Tibial artery (tissue), 4 donors: ENCODE measurements at regions of chr2 and their contacts with region 1.

Region 1: GRCh38 chr2:44291281-44292248 is 16.3 kb downstream of the SLC3A1 start:
- DNase-seq: peak; percentile 38 to 80
- H3K4me3 ChIP-seq: peak overlapping the region; percentile 21 to 23
- H3K27ac ChIP-seq: peak overlapping the region; percentile 63 to 69
- H3K4me1 ChIP-seq: peaks cover 0 to 41% (median 23%) of the 10 kb centered on the region in 4 donors
- H3K27me3 ChIP-seq: no peaks in the 10 kb centered on the region
- CTCF ChIP-seq: peak; percentile 72 to 73

Region 2: GRCh38 chr2:44087036-44087713 is 204.4 kb before region 1 on chr2:
- intact Hi-C with region 1: loop called (anchors 5 kb)
- DNase-seq: peak; percentile 86 to 93
- H3K4me3 ChIP-seq: peak overlapping the region; percentile 41 to 53
- H3K27ac ChIP-seq: peak overlapping the region; percentile 68 to 85
- H3K4me1 ChIP-seq: peaks cover 0 to 17% (median 13%) of the 10 kb centered on the region in 4 donors
- H3K27me3 ChIP-seq: no peaks in the 10 kb centered on the region
- CTCF ChIP-seq: peak; percentile 95 to 96

Region 3: DNA sequence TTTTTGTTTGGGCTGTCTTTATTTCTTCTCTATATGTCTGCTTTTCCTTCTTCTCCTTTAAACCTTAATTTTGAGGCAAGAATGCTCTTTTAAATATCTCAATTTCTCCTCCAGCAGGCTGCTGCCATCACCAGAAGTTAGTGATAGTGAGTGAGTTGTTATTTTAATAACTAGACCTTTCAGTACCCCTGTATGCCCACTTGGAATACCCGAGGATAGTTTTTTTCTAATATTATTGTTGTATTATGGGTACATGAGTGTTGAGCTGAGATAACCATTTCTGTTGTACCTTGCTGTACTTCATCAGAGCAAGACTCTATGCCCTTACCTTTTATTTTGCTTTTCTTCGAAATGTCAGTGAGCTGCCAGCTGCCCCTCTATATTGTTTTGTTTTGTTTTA is 72.8 kb before region 1 on chr2:
- intact Hi-C with region 1: no loop called
- DNase-seq: no peak
- H3K4me3 ChIP-seq: no peak overlapping the region
- H3K27ac ChIP-seq: no peak overlapping the region
- H3K4me1 ChIP-seq: no peaks in the 10 kb centered on the region
- H3K27me3 ChIP-seq: no peaks in the 10 kb centered on the region
- CTCF ChIP-seq: no peak

Region 4: GRCh38 chr2:44244129-44244871 is 47.3 kb before region 1 on chr2:
- intact Hi-C with region 1: loop called (anchors 2 kb)
- DNase-seq: peak; percentile 53 to 71
- H3K4me3 ChIP-seq: peak overlapping the region; percentile 46 to 48
- H3K27ac ChIP-seq: peak overlapping the region; percentile 23 to 34
- H3K4me1 ChIP-seq: peaks cover 0 to 16% (median 9%) of the 10 kb centered on the region in 4 donors
- H3K27me3 ChIP-seq: no peaks in the 10 kb centered on the region
- CTCF ChIP-seq: peak; percentile 46 to 61